Activated CD4-positive, alpha-beta T cell treated with anti-CD3 and anti-CD28 coated beads for 36 hours (primary cell): ENCODE measurements at regions of chr2 and their contacts with region 1.

Region 1: GRCh38 chr2:677056-677965 is at the start of gene TMEM18:
- DNase-seq: peak; percentile 93
- ATAC-seq: peak; percentile 65
- H3K4me3 Mint-ChIP-seq: peak within 1 kb of the TSS; percentile 93
- H3K27ac Mint-ChIP-seq: peak within 1 kb of the TSS; percentile 97
- H3K4me1 Mint-ChIP-seq: peaks cover 39% of the 10 kb centered on the region
- H3K27me3 Mint-ChIP-seq: no peaks in the 10 kb centered on the region
- total RNA-seq, gene TMEM18: 27.0 to 27.1 TPM

Region 2: DNA sequence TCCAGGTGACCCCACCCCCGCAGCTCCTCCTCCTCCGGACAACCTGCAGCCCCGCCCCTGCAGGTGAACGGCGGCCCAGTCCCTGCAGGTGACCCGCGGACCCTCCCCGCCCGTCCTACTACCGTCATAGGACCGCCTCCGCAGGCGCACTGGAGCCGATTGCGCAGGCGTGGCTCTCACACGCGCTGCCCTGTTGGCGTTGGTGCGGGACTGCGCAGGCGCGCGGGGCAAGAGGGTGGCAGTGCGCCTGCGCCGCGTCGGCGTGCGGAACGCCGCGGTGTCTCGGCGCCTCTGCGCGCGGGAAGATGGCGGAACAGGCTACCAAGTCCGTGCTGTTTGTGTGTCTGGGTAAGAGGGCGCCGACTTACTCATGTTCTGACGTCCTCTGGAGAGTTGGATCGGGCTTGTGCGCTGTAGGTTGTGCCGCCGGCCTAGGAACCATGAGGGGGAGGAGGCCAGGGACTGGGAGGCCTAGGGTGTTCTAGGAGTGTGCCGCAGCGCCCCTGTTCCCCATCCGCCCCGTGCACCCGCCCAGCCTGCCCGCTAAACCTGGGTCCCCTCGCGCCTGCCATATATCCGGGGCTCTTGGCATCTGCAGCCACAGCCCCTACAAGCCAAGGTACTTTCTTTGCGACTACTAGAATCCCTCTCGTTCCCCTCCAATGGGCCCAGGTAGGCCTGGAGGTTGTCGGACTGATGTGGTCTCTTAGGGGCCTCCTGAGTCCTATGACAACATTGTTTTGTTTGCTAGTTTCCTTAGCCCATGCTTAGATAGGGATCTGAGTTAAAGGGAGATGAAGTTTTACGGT is 412.4 kb before region 1 on chr2 and contains the start of gene ACP1:
- CTCF ChIA-PET with region 1: no interaction called
- POLR2A ChIA-PET with region 1: no interaction called
- intact Hi-C with region 1: loop called (anchors 1 kb)
- DNase-seq: peak; percentile 96
- ATAC-seq: peak; percentile 95
- H3K4me3 Mint-ChIP-seq: peak within 1 kb of the TSS; percentile 92
- H3K27ac Mint-ChIP-seq: peak within 1 kb of the TSS; percentile 87
- H3K4me1 Mint-ChIP-seq: peaks cover 46% of the 10 kb centered on the region
- H3K27me3 Mint-ChIP-seq: no peaks in the 10 kb centered on the region
- total RNA-seq, gene ACP1: 136 to 139 TPM

Region 3: GRCh38 chr2:317501-318424 is 359.5 kb before region 1 on chr2:
- CTCF ChIA-PET with region 1: no interaction called
- POLR2A ChIA-PET with region 1: no interaction called
- intact Hi-C with region 1: loop called in 1 of 2 experiments (anchors 2 kb)
- DNase-seq: peak; percentile 63
- ATAC-seq: peak; percentile 83
- H3K4me3 Mint-ChIP-seq: peak overlapping the region; percentile 75
- H3K27ac Mint-ChIP-seq: peak overlapping the region; percentile 89
- H3K4me1 Mint-ChIP-seq: peaks cover 24% of the 10 kb centered on the region
- H3K27me3 Mint-ChIP-seq: peaks cover 13% of the 10 kb centered on the region

Region 4: GRCh38 chr2:375270-375955 is 301.9 kb before region 1 on chr2:
- CTCF ChIA-PET with region 1: no interaction called
- POLR2A ChIA-PET with region 1: no interaction called
- intact Hi-C with region 1: no loop called
- DNase-seq: no peak
- ATAC-seq: no peak
- H3K4me3 Mint-ChIP-seq: no peak overlapping the region
- H3K27ac Mint-ChIP-seq: no peak overlapping the region
- H3K4me1 Mint-ChIP-seq: no peaks in the 10 kb centered on the region
- H3K27me3 Mint-ChIP-seq: peaks cover 17% of the 10 kb centered on the region

Region 5: DNA sequence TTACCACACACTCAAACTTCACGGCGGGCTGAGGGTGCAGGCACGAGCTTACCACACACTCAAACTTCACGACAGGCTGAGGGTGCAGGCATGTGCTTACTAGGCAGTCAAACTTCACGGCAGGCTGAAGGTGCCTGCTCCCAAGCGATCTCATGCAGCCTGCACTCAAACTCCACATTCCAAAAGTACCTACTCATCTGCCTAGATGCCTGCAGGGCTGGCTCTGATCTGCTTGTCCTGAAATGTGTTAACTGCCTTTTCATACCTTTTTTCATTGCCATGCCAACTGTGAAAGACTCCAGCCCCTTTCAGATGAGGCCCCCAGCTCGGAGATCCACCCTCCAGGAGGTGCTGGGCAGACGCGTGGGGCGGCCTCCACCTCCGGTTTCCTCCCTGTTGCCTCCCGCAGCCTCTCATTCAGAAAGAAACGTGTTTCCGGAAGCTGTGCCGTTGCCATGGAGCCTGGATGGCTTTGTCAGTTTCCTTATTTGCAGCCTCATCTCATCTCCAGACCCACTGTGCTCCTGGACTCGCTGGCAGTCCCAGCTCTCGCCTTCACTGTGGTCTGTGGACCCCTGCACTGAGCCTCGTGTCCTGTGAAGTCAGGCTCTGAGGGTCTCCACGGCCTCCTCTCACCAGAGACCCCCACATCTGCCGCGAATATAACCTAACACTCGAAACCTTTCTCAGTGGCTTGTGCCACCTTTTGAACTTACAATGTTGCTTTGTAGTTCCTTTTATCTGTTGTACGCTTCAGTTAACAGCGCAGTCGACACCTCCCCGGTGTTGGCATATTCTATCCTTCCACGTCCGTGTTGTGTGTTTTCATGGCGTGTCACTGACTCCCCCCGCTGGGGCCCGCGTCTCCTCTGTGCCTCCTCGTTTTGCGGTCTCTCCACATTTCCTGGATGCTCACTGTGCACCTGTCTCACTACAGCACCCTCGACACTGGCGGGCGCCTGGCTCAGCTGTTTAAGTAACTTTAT is 283.3 kb before region 1 on chr2:
- CTCF ChIA-PET with region 1: no interaction called
- POLR2A ChIA-PET with region 1: no interaction called
- intact Hi-C with region 1: loop called in 1 of 2 experiments (anchors 1 kb)
- DNase-seq: peak; percentile 81
- ATAC-seq: peak; percentile 90
- H3K4me3 Mint-ChIP-seq: peak overlapping the region; percentile 57
- H3K27ac Mint-ChIP-seq: peak overlapping the region; percentile 56
- H3K4me1 Mint-ChIP-seq: peaks cover 16% of the 10 kb centered on the region
- H3K27me3 Mint-ChIP-seq: peaks cover 2% of the 10 kb centered on the region

Region 6: DNA sequence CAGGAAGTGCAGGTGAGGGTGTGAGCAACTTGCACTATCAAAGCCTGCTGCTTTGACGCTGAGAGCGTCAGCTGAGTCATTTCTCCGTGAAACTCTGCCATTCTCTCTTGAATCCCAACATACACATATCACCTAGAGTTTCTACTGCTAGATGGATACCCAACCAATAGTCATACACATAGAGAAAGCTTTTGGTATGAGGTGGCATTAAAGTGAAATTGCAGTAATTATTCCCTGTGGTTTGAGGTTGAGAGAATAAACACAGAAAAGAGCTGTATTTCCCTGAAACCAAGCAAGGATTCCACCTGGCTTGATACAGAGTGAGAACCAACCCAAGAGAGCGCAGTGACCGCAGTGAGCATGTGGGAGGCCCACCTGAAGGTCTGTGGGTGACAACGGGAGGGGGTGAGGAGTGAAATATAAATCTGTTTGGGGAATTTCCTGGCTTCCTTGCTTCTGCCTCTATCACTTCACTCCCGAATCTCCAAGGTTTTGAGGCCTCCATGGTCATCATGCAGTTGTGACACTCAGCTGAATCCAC is 28.7 kb after region 1 on chr2:
- CTCF ChIA-PET with region 1: no interaction called
- POLR2A ChIA-PET with region 1: no interaction called
- intact Hi-C with region 1: loop called in 1 of 2 experiments (anchors 1 kb)
- DNase-seq: peak; percentile 61
- ATAC-seq: peak; percentile 89
- H3K4me3 Mint-ChIP-seq: no peak overlapping the region
- H3K27ac Mint-ChIP-seq: peak overlapping the region; percentile 6
- H3K4me1 Mint-ChIP-seq: peaks cover 11% of the 10 kb centered on the region
- H3K27me3 Mint-ChIP-seq: peaks cover 6% of the 10 kb centered on the region

Region 7: GRCh38 chr2:735670-736582 is 58.6 kb after region 1 on chr2:
- CTCF ChIA-PET with region 1: no interaction called
- POLR2A ChIA-PET with region 1: no interaction called
- intact Hi-C with region 1: loop called in 1 of 2 experiments (anchors 1 kb)
- DNase-seq: peak; percentile 10
- ATAC-seq: peak; percentile 30
- H3K4me3 Mint-ChIP-seq: no peak overlapping the region
- H3K27ac Mint-ChIP-seq: no peak overlapping the region
- H3K4me1 Mint-ChIP-seq: peaks cover 4% of the 10 kb centered on the region
- H3K27me3 Mint-ChIP-seq: peaks cover 11% of the 10 kb centered on the region